ENCODE measurements at regions of chr20 and their contacts with region 1.

Region 1: GRCh38 chr20:15658295-15658694 is 915.0 kb downstream of the KIF16B start:
- DNase-seq: no peak
- H3K4me3 ChIP-seq: no peak overlapping the region
- H3K27ac ChIP-seq: no peak overlapping the region
- H3K4me1 ChIP-seq: no peaks in the 10 kb centered on the region
- H3K27me3 ChIP-seq: no peaks in the 10 kb centered on the region
- CTCF ChIP-seq: no peak
- POLR2A ChIP-seq: no peak

Region 2: GRCh38 chr20:15609921-15610320 is 48.4 kb before region 1 on chr20:
- intact Hi-C with region 1: loop called (anchors 2 kb)
- DNase-seq: no peak
- H3K4me3 ChIP-seq: no peak overlapping the region
- H3K27ac ChIP-seq: no peak overlapping the region
- H3K4me1 ChIP-seq: no peaks in the 10 kb centered on the region
- H3K27me3 ChIP-seq: no peaks in the 10 kb centered on the region
- CTCF ChIP-seq: no peak
- POLR2A ChIP-seq: no peak

Region 3: GRCh38 chr20:15767586-15767985 is 109.3 kb after region 1 on chr20:
- intact Hi-C with region 1: no loop called
- DNase-seq: no peak
- H3K4me3 ChIP-seq: no peak overlapping the region
- H3K27ac ChIP-seq: no peak overlapping the region
- H3K4me1 ChIP-seq: no peaks in the 10 kb centered on the region
- H3K27me3 ChIP-seq: no peaks in the 10 kb centered on the region
- CTCF ChIP-seq: no peak
- POLR2A ChIP-seq: no peak

Measured in breast epithelium (tissue), 4 donors.